Heart left ventricle (tissue), 16 donors: ENCODE measurements at regions of chr3 and their contacts with region 1.

Region 1: GRCh38 chr3:40179016-40179415 is 130.5 kb upstream of the EIF1B start:
- DNase-seq: peak; percentile 41 to 73 (median 64)
- ATAC-seq: peak; percentile 30 to 69 (median 61)
- H3K4me3 ChIP-seq: no peak overlapping the region
- H3K27ac ChIP-seq: no peak overlapping the region
- H3K4me1 ChIP-seq: peaks cover 0 to 3% (median 0%) of the 10 kb centered on the region in 12 donors
- H3K27me3 ChIP-seq: no peaks in the 10 kb centered on the region
- CTCF ChIP-seq: peak; percentile 59 to 88 (median 78)
- POLR2A ChIP-seq: no peak

Region 2: DNA sequence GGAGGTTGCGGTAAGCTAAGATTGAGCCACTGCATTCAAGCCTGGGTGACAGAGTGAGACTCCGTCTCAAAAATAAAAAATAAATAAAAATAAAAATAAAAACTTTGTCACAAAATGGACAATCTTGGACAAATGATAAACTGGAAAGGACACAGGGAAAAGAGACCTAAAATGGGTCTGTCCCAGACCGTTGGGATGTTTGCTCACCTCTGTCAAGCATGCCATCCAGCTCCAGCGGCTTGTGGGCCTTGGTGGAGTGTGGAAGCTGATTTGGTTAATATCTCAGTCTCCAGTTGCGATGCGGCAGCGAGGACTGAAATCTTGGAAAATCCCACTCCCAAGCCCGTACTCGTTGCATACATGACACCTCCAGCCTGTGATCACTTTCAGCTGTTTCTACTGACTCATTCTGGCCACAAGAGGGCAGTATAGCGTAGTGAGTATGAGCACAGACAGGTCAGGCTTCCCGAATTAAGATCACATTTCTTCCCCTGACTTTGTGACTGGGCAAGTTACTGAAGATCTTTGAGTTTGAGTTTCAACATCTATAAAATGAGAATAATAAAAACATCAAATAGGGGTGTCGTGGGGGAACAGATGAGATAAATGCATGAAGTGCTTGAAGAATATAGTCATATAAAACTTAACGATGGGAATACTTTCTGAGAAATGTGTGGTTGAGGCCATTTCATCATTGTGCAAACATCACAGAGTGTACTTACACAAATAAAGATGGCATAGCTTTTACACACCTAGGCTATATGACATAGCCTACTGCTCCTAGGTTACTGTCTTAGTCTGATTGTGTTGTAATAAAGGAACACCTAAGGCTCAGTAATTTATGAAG is 731.2 kb before region 1 on chr3:
- intact Hi-C with region 1: loop called in 1 of 10 experiments (anchors 10 kb)
- DNase-seq: peak in 4 of 5 donors; percentile 42 to 67 (median 55)
- ATAC-seq: peak; percentile 86 to 94 (median 90)
- H3K4me3 ChIP-seq: no peak overlapping the region
- H3K27ac ChIP-seq: no peak overlapping the region
- H3K4me1 ChIP-seq: peaks cover 0 to 7% (median 0%) of the 10 kb centered on the region in 12 donors
- H3K27me3 ChIP-seq: no peaks in the 10 kb centered on the region
- CTCF ChIP-seq: peak; percentile 77 to 93 (median 86)
- POLR2A ChIP-seq: no peak

Region 3: GRCh38 chr3:39541917-39542329 is 637.1 kb before region 1 on chr3:
- intact Hi-C with region 1: loop called in 9 of 10 experiments (anchors 2 to 10 kb)
- DNase-seq: no peak
- ATAC-seq: no peak
- H3K4me3 ChIP-seq: peak overlapping the region in 4 of 12 donors; percentile 17 to 32 (median 22)
- H3K27ac ChIP-seq: no peak overlapping the region
- H3K4me1 ChIP-seq: peaks cover 0 to 8% (median 0%) of the 10 kb centered on the region in 12 donors
- H3K27me3 ChIP-seq: no peaks in the 10 kb centered on the region
- CTCF ChIP-seq: peak in 11 of 12 donors; percentile 25 to 59 (median 52)
- POLR2A ChIP-seq: no peak

Region 4: GRCh38 chr3:39668420-39668819 is 510.6 kb before region 1 on chr3:
- intact Hi-C with region 1: loop called in 1 of 10 experiments (anchors 2 kb)
- DNase-seq: no peak
- ATAC-seq: peak in 1 of 4 donors; percentile 49
- H3K4me3 ChIP-seq: no peak overlapping the region
- H3K27ac ChIP-seq: no peak overlapping the region
- H3K4me1 ChIP-seq: no peaks in the 10 kb centered on the region
- H3K27me3 ChIP-seq: peaks cover 0 to 16% (median 3%) of the 10 kb centered on the region in 9 donors
- CTCF ChIP-seq: peak; percentile 32 to 60 (median 45)
- POLR2A ChIP-seq: no peak

Region 5: DNA sequence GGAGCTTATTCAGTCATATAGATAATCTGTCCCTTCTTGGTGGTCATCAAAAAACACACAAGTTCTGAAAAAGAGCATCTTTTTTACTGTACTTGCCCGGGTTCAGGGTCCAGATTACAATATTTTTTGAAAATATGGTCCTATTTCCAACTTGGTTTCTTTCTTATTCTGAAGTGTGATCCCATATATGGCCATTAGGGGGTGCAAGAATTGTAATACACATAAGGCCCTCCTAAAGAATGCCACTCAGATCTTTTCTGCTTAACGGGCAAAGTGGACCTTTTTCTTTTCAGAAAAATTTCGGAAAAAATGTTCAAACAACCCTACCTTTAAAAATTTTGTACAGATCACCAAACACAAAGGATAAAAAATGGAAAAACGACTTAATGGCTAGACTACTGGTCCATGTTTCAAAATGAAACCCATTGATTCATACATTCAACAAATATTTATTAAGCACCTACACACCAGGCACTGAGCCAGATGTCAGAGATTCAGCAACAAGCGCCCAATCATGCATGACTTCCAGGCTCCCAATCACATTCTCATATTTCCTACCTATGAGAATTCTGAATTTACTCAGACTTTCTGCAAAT is 471.6 kb before region 1 on chr3:
- intact Hi-C with region 1: loop called (anchors 1 to 5 kb)
- DNase-seq: no peak
- ATAC-seq: no peak
- H3K4me3 ChIP-seq: no peak overlapping the region
- H3K27ac ChIP-seq: no peak overlapping the region
- H3K4me1 ChIP-seq: no peaks in the 10 kb centered on the region
- H3K27me3 ChIP-seq: no peaks in the 10 kb centered on the region
- CTCF ChIP-seq: peak; percentile 48 to 76 (median 72)
- POLR2A ChIP-seq: no peak

Region 6: GRCh38 chr3:39724233-39724846 is 454.7 kb before region 1 on chr3:
- intact Hi-C with region 1: loop called in 6 of 10 experiments (anchors 1 to 5 kb)
- DNase-seq: no peak
- ATAC-seq: peak in 1 of 4 donors; percentile 37
- H3K4me3 ChIP-seq: no peak overlapping the region
- H3K27ac ChIP-seq: no peak overlapping the region
- H3K4me1 ChIP-seq: no peaks in the 10 kb centered on the region
- H3K27me3 ChIP-seq: peaks cover 0 to 3% (median 0%) of the 10 kb centered on the region in 9 donors
- CTCF ChIP-seq: peak in 11 of 12 donors; percentile 21 to 55 (median 37)
- POLR2A ChIP-seq: no peak

Region 7: GRCh38 chr3:39812537-39812936 is 366.5 kb before region 1 on chr3:
- intact Hi-C with region 1: loop called in 6 of 10 experiments (anchors 5 to 10 kb)
- DNase-seq: no peak
- ATAC-seq: no peak
- H3K4me3 ChIP-seq: no peak overlapping the region
- H3K27ac ChIP-seq: no peak overlapping the region
- H3K4me1 ChIP-seq: peaks cover 0 to 21% (median 12%) of the 10 kb centered on the region in 12 donors
- H3K27me3 ChIP-seq: peaks cover 2 to 51% (median 28%) of the 10 kb centered on the region in 9 donors
- CTCF ChIP-seq: peak in 8 of 12 donors; percentile 7 to 54 (median 34)
- POLR2A ChIP-seq: no peak

Region 8: GRCh38 chr3:40901305-40901704 is 722.3 kb after region 1 on chr3:
- intact Hi-C with region 1: no loop called
- DNase-seq: no peak
- ATAC-seq: no peak
- H3K4me3 ChIP-seq: no peak overlapping the region
- H3K27ac ChIP-seq: no peak overlapping the region
- H3K4me1 ChIP-seq: no peaks in the 10 kb centered on the region
- H3K27me3 ChIP-seq: no peaks in the 10 kb centered on the region
- CTCF ChIP-seq: no peak
- POLR2A ChIP-seq: no peak